Heart left ventricle (tissue), 16 donors: ENCODE measurements at regions of chr7 and their contacts with region 1.

Region 1: DNA sequence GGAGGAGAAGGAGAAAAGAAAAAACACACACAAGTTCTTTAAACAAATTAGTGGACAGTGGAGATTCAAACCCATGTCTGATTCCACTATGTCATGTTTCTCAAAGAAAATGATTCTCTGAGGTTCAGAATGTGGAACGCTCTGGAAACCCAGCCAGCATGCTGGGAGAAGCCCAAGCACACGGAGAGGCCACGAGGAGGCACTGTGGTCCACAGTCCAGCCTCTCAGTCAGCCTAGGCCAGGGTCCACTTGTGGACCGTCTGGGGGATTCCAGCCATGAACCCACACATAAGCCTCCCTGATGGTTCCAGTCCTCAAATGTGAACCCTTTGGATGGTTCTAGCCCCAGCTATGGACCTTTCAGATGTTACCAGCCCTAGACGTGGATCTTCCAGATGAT is 73.4 kb downstream of the CAV1 start:
- DNase-seq: no peak
- ATAC-seq: peak in 2 of 4 donors; percentile 36 to 57
- H3K4me3 ChIP-seq: no peak overlapping the region
- H3K27ac ChIP-seq: no peak overlapping the region
- H3K4me1 ChIP-seq: no peaks in the 10 kb centered on the region
- H3K27me3 ChIP-seq: no peaks in the 10 kb centered on the region
- CTCF ChIP-seq: peak in 9 of 12 donors; percentile 6 to 45 (median 26)
- POLR2A ChIP-seq: no peak

Region 2: GRCh38 chr7:116665332-116665996 is 67.2 kb after region 1 on chr7:
- intact Hi-C with region 1: loop called in 6 of 10 experiments (anchors 5 to 10 kb)
- DNase-seq: no peak
- ATAC-seq: no peak
- H3K4me3 ChIP-seq: no peak overlapping the region
- H3K27ac ChIP-seq: no peak overlapping the region
- H3K4me1 ChIP-seq: peaks cover 0 to 16% (median 0%) of the 10 kb centered on the region in 12 donors
- H3K27me3 ChIP-seq: peaks cover 0 to 3% (median 0%) of the 10 kb centered on the region in 9 donors
- CTCF ChIP-seq: no peak
- POLR2A ChIP-seq: no peak

Region 3: DNA sequence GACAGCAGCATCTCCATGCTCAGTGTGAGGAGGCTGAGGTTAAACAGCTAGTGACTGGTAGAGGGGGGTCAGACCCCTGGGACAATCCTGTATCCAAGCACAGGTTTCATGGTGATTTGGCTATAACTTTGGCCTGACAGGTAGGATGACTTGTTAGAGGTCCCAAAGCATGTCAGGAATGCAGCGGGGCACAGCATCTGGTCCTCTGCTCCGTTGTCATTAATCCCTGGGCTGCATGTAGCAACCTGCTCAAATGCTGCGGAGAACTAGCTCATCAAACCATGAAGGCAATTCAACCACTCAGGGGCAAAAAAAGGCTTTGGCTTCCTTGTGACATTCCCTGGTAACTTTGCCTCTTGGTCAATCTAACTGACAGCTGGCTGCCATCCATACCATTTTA is 697.8 kb after region 1 on chr7:
- intact Hi-C with region 1: no loop called
- DNase-seq: no peak
- ATAC-seq: no peak
- H3K4me3 ChIP-seq: no peak overlapping the region
- H3K27ac ChIP-seq: no peak overlapping the region
- H3K4me1 ChIP-seq: no peaks in the 10 kb centered on the region
- H3K27me3 ChIP-seq: no peaks in the 10 kb centered on the region
- CTCF ChIP-seq: no peak
- POLR2A ChIP-seq: no peak